ENCODE measurements at regions of chr19 and their contacts with region 1.

Region 1: GRCh38 chr19:12899891-12900518 is 9.0 kb downstream of the GCDH start:
- DNase-seq: peak; percentile 82
- ATAC-seq: peak; percentile 85
- H3K4me3 Mint-ChIP-seq: peak overlapping the region; percentile 56
- H3K27ac Mint-ChIP-seq: peak overlapping the region; percentile 88
- H3K4me1 Mint-ChIP-seq: peaks cover 26% of the 10 kb centered on the region
- H3K27me3 Mint-ChIP-seq: no peaks in the 10 kb centered on the region

Region 2: GRCh38 chr19:12867120-12868099 is 32.6 kb before region 1 on chr19:
- CTCF ChIA-PET with region 1: no interaction called
- DNase-seq: peak; percentile 79
- ATAC-seq: peak; percentile 81
- H3K4me3 Mint-ChIP-seq: peak overlapping the region; percentile 43
- H3K27ac Mint-ChIP-seq: peak overlapping the region; percentile 19
- H3K4me1 Mint-ChIP-seq: peaks cover 8% of the 10 kb centered on the region
- H3K27me3 Mint-ChIP-seq: peaks cover 5% of the 10 kb centered on the region

Region 3: DNA sequence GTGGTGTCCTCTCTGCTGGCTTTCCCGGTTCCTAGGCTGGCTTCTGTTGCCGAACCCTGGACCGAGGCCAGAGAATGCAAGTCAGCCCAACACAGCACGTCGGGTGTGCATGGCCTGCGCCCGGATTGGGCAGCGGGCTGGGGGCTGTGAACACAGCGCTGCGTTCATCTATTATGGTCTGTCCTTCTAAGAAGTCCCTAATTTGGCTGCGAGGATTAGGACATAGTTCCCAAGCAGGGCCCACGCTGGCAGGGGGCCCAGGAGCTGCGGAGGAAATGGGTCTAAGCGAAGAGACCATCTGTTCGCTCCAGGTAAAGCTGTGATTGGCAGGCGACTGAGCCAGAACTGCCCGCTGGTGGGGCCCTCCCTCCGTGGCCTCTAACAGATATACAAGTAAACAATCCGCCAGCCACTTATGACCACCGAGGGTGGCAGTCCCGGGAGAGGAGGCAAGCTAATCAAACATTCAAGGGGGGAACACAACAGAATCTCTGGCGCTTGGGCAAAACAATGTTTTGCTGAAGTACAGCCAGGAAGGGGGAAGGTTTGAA is 13.1 kb after region 1 on chr19:
- CTCF ChIA-PET with region 1: interaction called, 14 read pairs
- DNase-seq: no peak
- ATAC-seq: no peak
- H3K4me3 Mint-ChIP-seq: no peak overlapping the region
- H3K27ac Mint-ChIP-seq: peak overlapping the region; percentile 88
- H3K4me1 Mint-ChIP-seq: peaks cover 35% of the 10 kb centered on the region
- H3K27me3 Mint-ChIP-seq: no peaks in the 10 kb centered on the region

Region 4: GRCh38 chr19:13117772-13118423 is 217.9 kb after region 1 on chr19 and contains the start of gene NACC1:
- CTCF ChIA-PET with region 1: no interaction called
- DNase-seq: peak; percentile 93
- ATAC-seq: peak; percentile 88
- H3K4me3 Mint-ChIP-seq: peak within 1 kb of the TSS; percentile 93
- H3K27ac Mint-ChIP-seq: peak within 1 kb of the TSS; percentile 96
- H3K4me1 Mint-ChIP-seq: peaks cover 56% of the 10 kb centered on the region
- H3K27me3 Mint-ChIP-seq: no peaks in the 10 kb centered on the region
- total RNA-seq, gene NACC1: 82.2 to 96.0 TPM